ENCODE measurements at regions of chr6 and their contacts with region 1.

Region 1: DNA sequence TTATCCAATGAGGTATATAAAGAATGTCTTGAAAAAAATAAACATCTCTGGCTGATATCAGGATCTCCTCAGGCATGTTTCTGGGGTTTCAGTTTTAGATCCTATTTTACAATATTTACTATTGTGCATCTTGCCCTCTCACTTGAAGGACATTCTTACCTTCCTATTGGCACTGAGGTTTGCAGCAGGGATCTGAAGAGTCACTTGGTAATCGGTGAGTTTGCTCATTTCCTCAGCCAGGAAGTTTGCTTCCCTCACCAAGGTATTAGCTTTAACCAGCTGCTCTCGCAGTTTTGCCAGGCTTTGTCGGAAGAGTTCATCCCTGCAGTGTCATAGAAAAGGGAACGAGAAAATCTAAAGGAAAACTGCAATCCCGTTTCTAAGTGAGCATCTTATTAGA is 101.9 kb upstream of the NUP153 start:
- DNase-seq: no peak
- H3K4me3 ChIP-seq: no peak overlapping the region
- H3K27ac ChIP-seq: no peak overlapping the region
- H3K4me1 ChIP-seq: no peaks in the 10 kb centered on the region
- H3K27me3 ChIP-seq: no peaks in the 10 kb centered on the region
- CTCF ChIP-seq: no peak
- EP300 ChIP-seq: no peak
- POLR2A ChIP-seq: no peak

Region 2: GRCh38 chr6:17156112-17156921 is 652.3 kb before region 1 on chr6:
- intact Hi-C with region 1: loop called (anchors 10 kb)
- DNase-seq: peak; percentile 72 to 90
- H3K4me3 ChIP-seq: no peak overlapping the region
- H3K27ac ChIP-seq: no peak overlapping the region
- H3K4me1 ChIP-seq: peaks cover 0 to 5% (median 0%) of the 10 kb centered on the region in 4 donors
- H3K27me3 ChIP-seq: no peaks in the 10 kb centered on the region
- CTCF ChIP-seq: peak in 5 of 7 experiments; percentile 55 to 84 (median 71)
- EP300 ChIP-seq: no peak
- POLR2A ChIP-seq: no peak

Region 3: DNA sequence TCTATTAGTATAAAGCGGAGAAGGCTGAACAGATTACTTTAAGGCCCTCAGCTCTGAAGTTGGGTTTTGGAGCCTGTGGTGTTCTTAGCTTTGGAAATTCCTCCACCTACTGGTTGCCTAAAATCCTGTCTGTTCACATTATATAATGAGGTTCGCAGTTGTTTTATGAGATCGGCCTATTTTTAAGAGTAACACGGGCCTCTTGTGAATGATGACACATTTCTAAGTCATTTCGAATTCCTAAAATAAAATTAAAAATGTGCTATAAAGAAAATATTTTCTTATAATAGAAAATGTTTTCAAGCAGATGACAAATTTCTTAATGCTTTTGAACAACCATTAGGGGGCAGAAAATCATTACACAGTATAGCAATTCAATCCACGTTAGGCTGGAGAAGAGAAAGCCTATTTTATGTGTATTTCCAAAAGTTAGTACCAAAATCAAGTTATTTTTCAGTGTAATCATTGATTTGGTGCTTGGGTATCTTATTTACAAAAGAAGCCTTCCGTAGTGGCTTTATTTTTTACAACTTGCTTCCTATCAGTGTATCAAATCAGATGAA is 224.3 kb before region 1 on chr6:
- intact Hi-C with region 1: loop called (anchors 10 kb)
- DNase-seq: peak in 1 of 2 donors; percentile 87
- H3K4me3 ChIP-seq: no peak overlapping the region
- H3K27ac ChIP-seq: peak overlapping the region in 4 of 5 donors; percentile 42 to 79 (median 56)
- H3K4me1 ChIP-seq: peaks cover 0 to 29% (median 17%) of the 10 kb centered on the region in 4 donors
- H3K27me3 ChIP-seq: peaks cover 0 to 8% (median 0%) of the 10 kb centered on the region in 3 donors
- CTCF ChIP-seq: peak in 5 of 7 experiments; percentile 65 to 87 (median 78)
- EP300 ChIP-seq: no peak
- POLR2A ChIP-seq: no peak

Region 4: DNA sequence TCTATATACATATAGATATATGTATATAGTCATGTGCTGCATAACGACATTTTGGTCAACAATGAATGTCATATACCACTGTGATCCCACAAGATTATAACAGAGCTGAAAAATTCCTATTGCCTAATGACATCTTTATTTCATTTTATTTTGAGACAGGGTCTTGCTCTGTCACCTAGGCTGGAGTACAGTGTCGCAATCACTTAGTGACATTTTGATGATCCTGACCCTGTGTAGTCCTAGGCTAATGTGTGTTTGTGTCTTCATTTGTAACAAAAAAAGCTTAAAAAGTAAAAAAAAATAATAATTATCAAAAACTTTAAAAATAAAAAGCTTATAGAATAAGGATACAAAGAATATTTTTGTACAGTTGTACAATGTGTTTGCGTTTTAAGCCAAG is 212.5 kb before region 1 on chr6:
- intact Hi-C with region 1: no loop called
- DNase-seq: no peak
- H3K4me3 ChIP-seq: no peak overlapping the region
- H3K27ac ChIP-seq: no peak overlapping the region
- H3K4me1 ChIP-seq: peaks cover 0 to 9% (median 6%) of the 10 kb centered on the region in 4 donors
- H3K27me3 ChIP-seq: no peaks in the 10 kb centered on the region
- CTCF ChIP-seq: no peak
- EP300 ChIP-seq: no peak
- POLR2A ChIP-seq: no peak

Region 5: DNA sequence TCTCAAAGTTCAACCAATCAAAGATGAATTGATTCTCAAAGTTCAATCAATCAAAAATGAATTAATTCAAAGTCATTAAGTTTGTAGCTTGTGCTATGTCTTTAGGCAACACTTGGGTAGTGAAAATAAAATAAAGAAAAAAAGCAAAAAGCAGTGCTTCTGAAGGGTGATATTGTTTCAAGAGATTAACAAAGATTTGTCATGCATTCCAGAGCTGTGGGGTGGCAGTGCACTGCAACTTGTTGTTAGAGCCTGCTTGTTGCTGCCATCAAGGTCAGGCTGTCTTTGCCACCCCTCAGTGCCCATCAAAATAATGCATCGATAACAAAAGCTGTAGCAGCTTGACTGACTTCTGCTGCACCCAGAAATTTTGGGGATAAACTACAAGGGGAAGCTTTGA is 707.2 kb after region 1 on chr6:
- intact Hi-C with region 1: no loop called
- DNase-seq: no peak
- H3K4me3 ChIP-seq: no peak overlapping the region
- H3K27ac ChIP-seq: no peak overlapping the region
- H3K4me1 ChIP-seq: no peaks in the 10 kb centered on the region
- H3K27me3 ChIP-seq: no peaks in the 10 kb centered on the region
- CTCF ChIP-seq: no peak
- EP300 ChIP-seq: no peak
- POLR2A ChIP-seq: no peak